GM18951 (cell line): ENCODE measurements at regions of chr11 and their contacts with region 1.

Region 1: DNA sequence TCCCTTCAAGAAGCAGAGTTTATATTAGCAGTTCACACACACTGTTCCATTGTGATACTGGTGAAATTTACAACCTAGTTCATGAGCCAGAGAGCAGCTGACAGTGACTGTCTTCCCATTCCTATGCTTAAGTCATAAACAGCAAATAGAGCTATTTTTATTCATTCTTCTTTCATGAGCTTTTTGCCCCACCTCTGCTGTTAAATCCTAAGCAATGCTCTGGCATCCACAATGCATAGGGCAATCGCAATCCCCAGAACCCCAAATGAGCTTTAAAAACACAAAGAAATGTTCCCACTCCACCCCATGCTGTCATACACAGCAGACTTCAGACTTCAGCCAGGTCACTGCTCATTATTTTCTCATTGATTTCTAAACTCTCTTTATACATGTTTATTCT is 307.5 kb downstream of the ETS1 start:
- POLR2A ChIP-seq: no peak

Region 2: GRCh38 chr11:128757235-128757711 is 477.4 kb after region 1 on chr11:
- in situ Hi-C with region 1: loop called (anchors 10 kb)
- POLR2A ChIP-seq: no peak